Right ventricle myocardium inferior (tissue), 1 donor: ENCODE measurements at regions of chr10 and their contacts with region 1.

Region 1: GRCh38 chr10:86179961-86180360 is 186.6 kb downstream of the GRID1 start:
- DNase-seq: no peak
- ATAC-seq: no peak

Region 2: GRCh38 chr10:86200269-86200668 is 20.3 kb after region 1 on chr10:
- intact Hi-C with region 1: loop called (anchors 2 kb)
- DNase-seq: no peak
- ATAC-seq: no peak

Region 3: GRCh38 chr10:86244297-86245014 is 64.5 kb after region 1 on chr10:
- intact Hi-C with region 1: no loop called
- DNase-seq: no peak
- ATAC-seq: no peak

Region 4: DNA sequence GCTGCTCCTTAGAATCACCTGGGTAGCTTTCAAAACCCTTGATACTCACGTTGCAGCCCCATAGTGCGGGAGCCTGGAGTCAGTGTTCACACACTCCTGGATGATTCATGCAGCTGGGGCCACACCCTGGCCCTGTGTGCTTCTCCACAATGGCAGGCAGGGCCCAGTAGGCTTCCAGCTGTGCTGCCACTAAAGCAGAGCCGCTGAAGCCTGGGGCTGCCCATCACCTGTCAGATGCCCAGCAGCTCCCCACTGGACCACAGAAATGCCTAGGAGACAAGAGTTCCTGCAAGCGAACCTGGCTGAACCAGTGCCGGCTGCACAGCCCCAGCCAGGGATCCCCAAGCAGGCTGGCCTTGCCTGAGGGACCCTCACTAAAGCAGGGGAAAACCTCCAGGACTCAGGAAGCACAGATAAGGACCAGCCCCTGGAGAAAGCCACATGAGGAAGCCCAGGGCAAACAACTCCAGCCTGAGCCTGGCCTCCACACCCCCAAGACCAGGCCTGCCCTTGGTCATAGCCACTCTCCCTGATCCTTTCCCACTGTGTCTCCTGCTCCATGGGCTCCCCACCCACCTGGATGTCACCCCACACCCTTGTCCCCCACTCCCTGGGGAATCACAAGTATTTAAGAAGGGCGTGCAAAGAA is 74.7 kb after region 1 on chr10:
- intact Hi-C with region 1: no loop called
- DNase-seq: no peak
- ATAC-seq: no peak